Activated CD4-positive, alpha-beta memory T cell treated with anti-CD3 and anti-CD28 coated beads, Interleukin-2, amount 10 ng/mL, durations not matched to agents 7 days and 5 days (primary cell): ENCODE measurements at regions of chr11 and their contacts with region 1.

Region 1: DNA sequence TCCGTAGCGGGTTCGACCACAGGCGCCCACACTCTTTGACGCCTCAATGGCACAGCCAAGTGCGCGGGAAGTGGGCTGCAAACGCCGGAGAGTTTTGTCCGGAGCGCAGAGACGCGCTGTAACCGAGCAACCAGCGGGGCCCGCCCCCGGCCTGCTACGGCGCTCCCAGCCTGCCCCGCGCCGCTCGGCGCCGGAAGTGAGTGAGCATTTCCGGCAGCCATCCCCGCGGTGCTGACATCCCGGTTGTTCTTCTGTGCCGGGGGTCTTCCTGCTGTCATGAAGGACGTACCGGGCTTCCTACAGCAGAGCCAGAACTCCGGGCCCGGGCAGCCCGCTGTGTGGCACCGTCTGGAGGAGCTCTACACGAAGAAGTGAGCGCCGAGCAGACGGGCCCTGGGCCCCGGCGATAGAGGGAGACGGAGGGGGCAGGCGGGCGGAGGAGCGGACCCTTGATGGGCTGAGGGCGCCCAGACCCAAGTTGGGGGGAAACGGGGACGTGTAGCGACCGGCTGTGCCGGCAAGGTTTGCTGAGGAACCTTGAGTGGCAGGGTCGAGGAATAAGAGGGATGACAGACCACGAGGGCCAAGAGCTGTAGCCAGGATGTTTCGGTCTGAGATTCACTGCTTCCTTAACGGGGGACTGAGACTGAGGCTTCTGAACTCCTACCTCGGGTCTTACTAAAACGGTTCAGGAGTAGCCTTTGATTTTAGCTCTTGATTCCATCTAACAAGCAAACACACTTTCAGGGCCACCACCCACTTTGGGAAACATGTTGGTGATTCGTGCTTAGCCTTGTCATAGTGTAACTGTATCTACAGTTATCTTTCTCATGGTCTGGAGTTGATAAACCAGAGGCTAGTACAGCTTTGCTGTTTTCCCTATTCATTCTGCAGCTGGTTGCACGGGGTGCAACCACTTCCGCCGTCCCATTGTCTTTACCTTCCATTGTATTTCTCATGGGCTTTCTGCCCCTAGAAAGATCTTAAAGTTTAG is at the start of gene PSMD13:
- DNase-seq: peak; percentile 90
- H3K4me3 Mint-ChIP-seq: peak within 1 kb of the TSS; percentile 92
- H3K27ac Mint-ChIP-seq: peak within 1 kb of the TSS; percentile 98
- H3K4me1 Mint-ChIP-seq: peaks cover 49% of the 10 kb centered on the region
- H3K27me3 Mint-ChIP-seq: no peaks in the 10 kb centered on the region
- total RNA-seq, gene PSMD13: 156 to 160 TPM

Region 2: DNA sequence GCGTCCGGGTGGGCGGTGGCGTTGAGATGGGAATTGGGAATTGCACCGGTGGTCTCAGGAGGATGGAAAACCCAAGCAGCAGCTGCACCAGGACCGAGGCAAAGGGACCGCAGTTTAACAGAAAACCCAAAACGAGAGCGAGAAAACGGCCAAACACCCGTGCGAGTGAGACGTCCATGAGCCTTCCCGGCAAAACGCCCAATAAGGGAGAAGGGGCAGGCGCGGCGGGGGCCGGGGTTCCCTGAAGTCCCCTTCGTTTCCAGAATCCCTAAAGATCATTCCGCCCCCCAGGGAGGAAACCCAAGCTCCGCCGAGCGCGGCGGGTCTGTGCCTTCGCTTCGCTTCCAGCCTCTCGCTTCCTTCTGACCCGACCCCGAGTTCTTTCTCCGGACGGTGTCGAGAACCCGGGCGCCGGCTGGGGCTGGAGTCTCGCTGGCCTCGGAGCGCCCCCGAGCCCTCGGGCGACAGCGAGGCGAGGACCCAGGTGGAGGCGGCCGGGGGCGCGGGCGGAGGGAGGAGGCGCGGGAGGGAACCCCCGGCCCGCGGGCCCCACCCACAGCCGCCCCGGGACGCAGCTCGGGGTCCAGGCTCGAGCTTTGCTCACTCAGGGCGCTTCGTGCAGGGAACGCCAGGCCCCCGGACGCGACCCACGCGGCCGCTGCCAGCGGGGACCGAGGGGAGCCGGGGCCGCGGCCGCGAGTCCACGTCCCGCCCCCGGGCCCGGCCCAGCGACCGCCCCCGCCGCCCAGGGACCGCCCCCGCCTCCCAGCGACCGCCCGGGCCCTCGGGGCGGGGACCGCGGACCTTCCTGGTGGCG is 51.5 kb after region 1 on chr11 and contains the start of gene PGGHG:
- CTCF ChIA-PET with region 1: no interaction called
- POLR2A ChIA-PET with region 1: interaction called, 10 read pairs
- DNase-seq: peak; percentile 71
- H3K4me3 Mint-ChIP-seq: peak within 1 kb of the TSS; percentile 95
- H3K27ac Mint-ChIP-seq: peak within 1 kb of the TSS; percentile 80
- H3K4me1 Mint-ChIP-seq: peaks cover 35% of the 10 kb centered on the region
- H3K27me3 Mint-ChIP-seq: peaks cover 10% of the 10 kb centered on the region
- total RNA-seq, gene PGGHG: 113 to 117 TPM

Region 3: DNA sequence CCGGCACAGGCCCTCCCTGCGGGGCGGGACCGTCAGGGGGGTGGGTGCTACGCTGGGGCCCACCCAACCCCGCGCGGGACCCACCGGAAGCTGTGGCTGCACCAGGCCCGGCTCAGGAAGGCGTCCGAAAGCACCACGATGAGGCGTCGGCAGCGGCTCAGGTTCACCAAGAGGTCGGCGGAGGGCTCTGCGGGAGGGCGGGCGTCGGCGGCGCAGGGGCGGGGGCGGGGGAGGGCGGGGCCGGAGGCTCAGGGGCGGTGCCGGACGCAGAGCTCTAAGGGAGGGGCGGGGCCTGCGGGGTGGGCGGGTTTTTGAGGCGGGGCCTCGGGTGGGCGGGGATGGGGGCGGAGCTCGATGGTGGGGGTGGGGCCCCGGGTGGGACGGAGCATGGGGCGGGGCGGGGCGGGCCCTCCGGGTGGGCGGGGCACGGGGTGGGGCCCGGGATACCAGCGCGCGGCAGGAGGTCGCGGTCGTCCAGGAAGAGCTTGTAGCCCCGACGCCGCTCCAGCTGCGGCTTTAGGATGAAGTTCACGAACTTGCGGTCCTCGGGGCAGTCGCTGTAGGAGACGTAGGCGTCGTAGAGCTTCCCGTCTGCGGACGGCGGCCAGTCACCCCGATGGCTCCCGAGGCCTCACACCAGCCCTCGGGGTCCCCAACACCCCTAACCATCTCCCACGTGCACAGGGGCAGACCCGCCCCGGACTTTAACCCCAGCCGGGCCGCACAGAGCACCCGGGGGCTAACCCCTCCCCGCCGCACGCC is 170.1 kb after region 1 on chr11:
- CTCF ChIA-PET with region 1: no interaction called
- POLR2A ChIA-PET with region 1: interaction called, 11 read pairs
- DNase-seq: peak; percentile 93
- H3K4me3 Mint-ChIP-seq: peak overlapping the region; percentile 32
- H3K27ac Mint-ChIP-seq: no peak overlapping the region
- H3K4me1 Mint-ChIP-seq: peaks cover 12% of the 10 kb centered on the region
- H3K27me3 Mint-ChIP-seq: no peaks in the 10 kb centered on the region